ENCODE measurements at regions of chr10 and their contacts with region 1.

Region 1: GRCh38 chr10:112767156-112767555 is 182.9 kb upstream of the TCF7L2 start:
- DNase-seq: peak; percentile 68
- ATAC-seq: peak; percentile 37; the same call in 1 of the 2 replicates
- H3K4me3 ChIP-seq: peak overlapping the region; percentile 50; the same call in 1 of the 2 replicates
- H3K27ac ChIP-seq: peak overlapping the region; percentile 89
- H3K4me1 ChIP-seq: peaks cover 53% of the 10 kb centered on the region
- H3K27me3 ChIP-seq: no peaks in the 10 kb centered on the region
- CTCF ChIP-seq: no peak

Region 2: GRCh38 chr10:112741830-112742411 is 25.2 kb before region 1 on chr10:
- CTCF ChIA-PET with region 1: no interaction called
- POLR2A ChIA-PET with region 1: no interaction called
- intact Hi-C with region 1: loop called (anchors 2 kb)
- DNase-seq: peak; percentile 72
- ATAC-seq: peak; percentile 32; the same call in 1 of the 2 replicates
- H3K4me3 ChIP-seq: peak overlapping the region; percentile 2; the same call in 1 of the 2 replicates
- H3K27ac ChIP-seq: peak overlapping the region; percentile 40
- H3K4me1 ChIP-seq: peaks cover 35% of the 10 kb centered on the region
- H3K27me3 ChIP-seq: no peaks in the 10 kb centered on the region
- CTCF ChIP-seq: no peak

Measured in PC-3 (cell line).